ENCODE measurements at regions of chr1 and their contacts with region 1.

Region 1: DNA sequence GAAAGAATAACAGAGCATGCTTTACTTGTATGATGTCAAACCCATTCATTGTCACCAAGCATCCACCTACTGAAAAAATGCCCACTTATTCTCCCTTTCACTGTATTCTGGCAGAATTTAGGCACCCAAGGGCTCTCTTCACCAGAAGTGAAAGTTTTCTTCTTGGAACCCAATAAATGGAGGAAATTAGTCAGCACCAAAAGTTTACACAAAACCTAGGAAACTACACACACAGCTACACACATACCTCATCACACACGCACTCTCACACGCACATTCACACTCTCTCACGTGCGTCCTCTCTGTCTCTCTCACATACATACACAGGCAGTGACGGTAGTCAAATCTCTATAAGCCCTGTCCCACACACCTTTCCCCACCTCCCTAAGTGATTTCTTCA is 37.6 kb downstream of the MCOLN2 start:
- DNase-seq: no peak
- H3K4me3 ChIP-seq: no peak overlapping the region
- H3K27ac ChIP-seq: no peak overlapping the region
- H3K4me1 ChIP-seq: no peaks in the 10 kb centered on the region
- H3K27me3 ChIP-seq: no peaks in the 10 kb centered on the region

Region 2: GRCh38 chr1:84907095-84907827 is 52.0 kb before region 1 on chr1:
- CTCF ChIA-PET with region 1: no interaction called
- POLR2A ChIA-PET with region 1: no interaction called
- DNase-seq: no peak
- H3K4me3 ChIP-seq: no peak overlapping the region
- H3K27ac ChIP-seq: no peak overlapping the region
- H3K4me1 ChIP-seq: no peaks in the 10 kb centered on the region
- H3K27me3 ChIP-seq: no peaks in the 10 kb centered on the region

Region 3: DNA sequence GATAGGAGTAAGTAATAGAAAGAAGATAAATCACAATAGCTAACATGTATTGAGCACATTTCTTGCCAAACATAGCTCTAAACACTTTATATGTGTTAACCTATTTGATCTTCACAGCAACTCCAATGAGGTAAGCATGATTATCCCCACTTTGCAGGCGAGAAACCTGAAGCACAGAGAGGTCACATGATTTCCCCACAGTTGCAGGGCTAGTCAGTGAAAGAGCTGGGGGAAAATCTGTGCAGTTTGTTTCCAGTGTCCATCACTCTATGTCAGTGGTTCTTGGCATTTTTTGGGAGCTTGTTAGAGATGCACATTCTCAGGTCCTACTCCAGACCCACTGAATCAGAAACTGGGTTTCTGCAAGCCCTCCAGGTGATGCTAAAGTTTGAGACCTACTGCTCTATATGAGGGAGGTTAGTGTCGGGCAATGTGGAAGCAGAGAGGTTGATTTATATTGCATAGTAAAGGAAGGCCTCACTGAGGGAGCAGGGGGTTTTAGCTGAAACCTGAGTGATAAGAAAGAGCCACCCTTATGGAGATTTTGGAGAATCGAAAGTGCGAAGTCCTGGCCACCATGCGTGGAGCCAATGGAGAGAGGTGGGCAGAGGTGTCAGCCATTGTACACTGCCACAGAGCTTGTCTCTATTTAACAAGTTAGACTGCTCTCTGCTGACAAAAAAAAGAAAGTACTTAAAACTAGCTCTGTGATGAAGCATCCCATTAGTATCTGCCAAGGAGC is 68.1 kb after region 1 on chr1:
- CTCF ChIA-PET with region 1: interaction called, 10 read pairs
- POLR2A ChIA-PET with region 1: no interaction called
- DNase-seq: peak; percentile 38 to 69 (median 66)
- H3K4me3 ChIP-seq: peak overlapping the region in 1 of 7 experiments; percentile 3
- H3K27ac ChIP-seq: no peak overlapping the region
- H3K4me1 ChIP-seq: no peaks in the 10 kb centered on the region
- H3K27me3 ChIP-seq: peaks cover 0 to 2% (median 0%) of the 10 kb centered on the region in 5 experiments